Activated CD4-positive, alpha-beta memory T cell treated with anti-CD3 and anti-CD28 coated beads for 36 hours (primary cell): ENCODE measurements at regions of chr12 and their contacts with region 1.

Region 1: DNA sequence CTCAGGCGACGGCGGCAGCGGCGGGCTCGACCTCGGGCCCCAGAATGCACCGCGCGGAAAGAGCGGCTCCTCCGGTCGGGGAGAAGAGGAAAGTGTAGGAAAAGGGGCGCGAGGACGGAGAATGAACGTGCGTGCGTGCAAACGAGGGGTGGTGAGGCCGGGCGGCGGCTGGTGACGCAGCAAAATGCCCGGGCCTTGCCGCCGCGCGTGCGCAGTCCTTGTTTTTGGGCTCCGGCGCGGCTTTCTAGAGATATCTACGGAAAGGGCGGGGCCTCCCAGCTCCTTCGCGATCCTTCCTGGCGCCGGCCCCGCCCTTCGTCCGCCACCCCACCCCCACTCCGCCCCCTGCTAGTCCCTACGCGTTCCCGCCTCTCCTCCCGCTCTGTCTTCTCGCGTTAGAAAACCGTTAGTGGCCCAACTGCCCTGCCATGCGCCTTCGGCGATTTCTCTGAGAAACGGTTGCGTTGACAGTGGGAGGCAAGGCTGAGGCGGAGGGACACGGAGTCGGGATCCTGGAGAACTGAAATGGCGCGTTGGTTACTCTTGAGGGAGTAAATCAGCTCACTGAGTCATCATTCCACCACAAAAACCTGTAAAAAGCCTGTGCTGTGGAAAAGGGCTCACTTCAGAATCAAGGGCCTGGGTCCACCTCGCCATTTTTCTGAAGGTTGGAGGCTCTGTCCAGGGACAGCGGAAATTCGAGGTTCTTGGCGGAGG is at the start of gene PTGES3:
- DNase-seq: peak; percentile 99
- H3K4me3 Mint-ChIP-seq: peak within 1 kb of the TSS; percentile 100
- H3K27ac Mint-ChIP-seq: peak within 1 kb of the TSS; percentile 94
- H3K4me1 Mint-ChIP-seq: peaks cover 13% of the 10 kb centered on the region
- H3K27me3 Mint-ChIP-seq: no peaks in the 10 kb centered on the region
- total RNA-seq, gene PTGES3: 355 to 356 TPM

Region 2: DNA sequence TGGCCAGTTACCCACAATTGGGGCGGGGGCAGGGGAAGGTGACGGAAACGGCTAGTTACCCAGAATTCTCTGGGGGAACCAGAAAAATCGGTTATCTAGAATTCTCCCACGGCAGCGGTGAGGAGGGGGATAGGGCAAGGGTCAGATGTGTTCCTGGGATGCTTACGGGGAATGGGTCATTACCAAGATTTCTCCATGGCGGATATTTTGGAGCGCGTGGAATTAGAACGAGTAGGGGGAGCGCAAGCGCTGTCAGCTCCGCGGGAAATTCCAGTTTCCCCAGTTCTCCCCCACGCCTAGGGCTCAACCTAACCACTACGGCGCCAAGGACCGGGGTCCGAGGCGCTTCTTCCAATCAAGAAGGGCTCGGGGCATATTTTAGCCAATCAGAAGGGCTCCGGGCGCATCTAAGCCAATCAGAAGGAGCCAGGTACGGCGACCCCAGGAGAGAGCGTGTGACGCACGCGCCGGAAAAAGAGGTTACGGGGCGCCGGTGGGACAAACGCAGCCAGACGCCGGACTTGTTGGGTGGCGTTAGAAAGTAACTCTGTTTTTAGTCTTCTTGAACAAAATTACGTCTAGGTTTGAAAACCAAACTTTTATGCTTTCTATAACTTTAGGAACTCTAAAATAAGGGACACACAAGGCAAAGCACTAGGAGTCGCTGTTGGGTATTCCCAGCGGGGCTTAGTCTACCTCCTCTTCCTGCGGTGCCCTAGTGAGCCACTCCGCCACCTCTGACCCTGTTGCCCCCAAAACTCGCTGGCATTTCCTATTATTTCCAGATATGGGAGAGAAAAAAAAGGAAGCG is 354.4 kb before region 1 on chr12 and contains the start of gene PAN2:
- CTCF ChIA-PET with region 1: no interaction called
- POLR2A ChIA-PET with region 1: no interaction called
- intact Hi-C with region 1: loop called (anchors 5 kb)
- DNase-seq: peak; percentile 97
- H3K4me3 Mint-ChIP-seq: peak within 1 kb of the TSS; percentile 94
- H3K27ac Mint-ChIP-seq: peak within 1 kb of the TSS; percentile 99
- H3K4me1 Mint-ChIP-seq: peaks cover 43% of the 10 kb centered on the region
- H3K27me3 Mint-ChIP-seq: no peaks in the 10 kb centered on the region
- total RNA-seq, gene PAN2: 49.0 to 51.2 TPM

Region 3: GRCh38 chr12:56636675-56637540 is 51.4 kb before region 1 on chr12:
- CTCF ChIA-PET with region 1: interaction called, 19 read pairs
- POLR2A ChIA-PET with region 1: interaction called, 59 read pairs
- intact Hi-C with region 1: loop called (anchors 2 kb)
- DNase-seq: peak; percentile 96
- H3K4me3 Mint-ChIP-seq: peak overlapping the region; percentile 82
- H3K27ac Mint-ChIP-seq: peak overlapping the region; percentile 86
- H3K4me1 Mint-ChIP-seq: peaks cover 45% of the 10 kb centered on the region
- H3K27me3 Mint-ChIP-seq: no peaks in the 10 kb centered on the region

Region 4: GRCh38 chr12:56677680-56678079 is 10.6 kb before region 1 on chr12:
- CTCF ChIA-PET with region 1: no interaction called
- POLR2A ChIA-PET with region 1: interaction called, 6 read pairs
- intact Hi-C with region 1: loop called (anchors 1 kb)
- DNase-seq: peak; percentile 57
- H3K4me3 Mint-ChIP-seq: no peak overlapping the region
- H3K27ac Mint-ChIP-seq: peak overlapping the region; percentile 56
- H3K4me1 Mint-ChIP-seq: peaks cover 67% of the 10 kb centered on the region
- H3K27me3 Mint-ChIP-seq: no peaks in the 10 kb centered on the region

Region 5: GRCh38 chr12:57078519-57079404 is 390.5 kb after region 1 on chr12 and contains the start of gene NEMP1:
- CTCF ChIA-PET with region 1: no interaction called
- POLR2A ChIA-PET with region 1: no interaction called
- intact Hi-C with region 1: loop called (anchors 2 kb)
- DNase-seq: peak; percentile 98
- H3K4me3 Mint-ChIP-seq: peak within 1 kb of the TSS; percentile 99
- H3K27ac Mint-ChIP-seq: peak within 1 kb of the TSS; percentile 97
- H3K4me1 Mint-ChIP-seq: peaks cover 36% of the 10 kb centered on the region
- H3K27me3 Mint-ChIP-seq: no peaks in the 10 kb centered on the region
- total RNA-seq, gene NEMP1: 70.6 to 73.5 TPM